ENCODE measurements at regions of chr17 and their contacts with region 1.

Region 1: GRCh38 chr17:78865682-78866390 is 25.2 kb upstream of the USP36 start:
- DNase-seq: peak; percentile 76
- ATAC-seq: peak; percentile 74
- H3K4me3 Mint-ChIP-seq: no peak overlapping the region
- H3K27ac Mint-ChIP-seq: no peak overlapping the region
- H3K4me1 Mint-ChIP-seq: no peaks in the 10 kb centered on the region
- H3K27me3 Mint-ChIP-seq: no peaks in the 10 kb centered on the region

Region 2: DNA sequence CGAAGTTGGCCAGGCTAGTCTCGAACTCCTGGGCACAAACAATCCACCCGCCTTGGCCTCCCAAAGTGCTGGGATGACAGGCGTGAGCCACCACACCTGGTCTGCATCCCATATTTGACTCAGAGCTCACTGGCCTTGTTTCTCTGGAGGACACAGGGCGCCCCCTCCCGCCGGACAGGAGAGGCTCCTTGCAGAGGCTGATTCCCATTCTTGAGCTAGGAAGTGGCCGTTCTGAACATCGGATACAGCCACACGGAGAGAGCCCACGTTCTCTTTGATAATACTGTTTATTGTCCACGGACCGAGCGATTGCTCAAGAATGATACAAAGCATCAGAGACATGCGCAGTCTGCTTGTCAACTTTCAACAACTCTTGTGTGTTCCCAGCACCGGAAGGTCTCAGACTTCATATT is 13.1 kb before region 1 on chr17:
- CTCF ChIA-PET with region 1: interaction called, 33 read pairs
- POLR2A ChIA-PET with region 1: no interaction called
- DNase-seq: no peak
- ATAC-seq: no peak
- H3K4me3 Mint-ChIP-seq: no peak overlapping the region
- H3K27ac Mint-ChIP-seq: no peak overlapping the region
- H3K4me1 Mint-ChIP-seq: no peaks in the 10 kb centered on the region
- H3K27me3 Mint-ChIP-seq: no peaks in the 10 kb centered on the region

Region 3: GRCh38 chr17:78890498-78890897 is 24.7 kb after region 1 on chr17:
- CTCF ChIA-PET with region 1: interaction called, 13 read pairs
- POLR2A ChIA-PET with region 1: no interaction called
- DNase-seq: peak; percentile 73
- ATAC-seq: peak; percentile 75
- H3K4me3 Mint-ChIP-seq: no peak overlapping the region
- H3K27ac Mint-ChIP-seq: peak overlapping the region; percentile 89
- H3K4me1 Mint-ChIP-seq: peaks cover 37% of the 10 kb centered on the region
- H3K27me3 Mint-ChIP-seq: no peaks in the 10 kb centered on the region

Region 4: DNA sequence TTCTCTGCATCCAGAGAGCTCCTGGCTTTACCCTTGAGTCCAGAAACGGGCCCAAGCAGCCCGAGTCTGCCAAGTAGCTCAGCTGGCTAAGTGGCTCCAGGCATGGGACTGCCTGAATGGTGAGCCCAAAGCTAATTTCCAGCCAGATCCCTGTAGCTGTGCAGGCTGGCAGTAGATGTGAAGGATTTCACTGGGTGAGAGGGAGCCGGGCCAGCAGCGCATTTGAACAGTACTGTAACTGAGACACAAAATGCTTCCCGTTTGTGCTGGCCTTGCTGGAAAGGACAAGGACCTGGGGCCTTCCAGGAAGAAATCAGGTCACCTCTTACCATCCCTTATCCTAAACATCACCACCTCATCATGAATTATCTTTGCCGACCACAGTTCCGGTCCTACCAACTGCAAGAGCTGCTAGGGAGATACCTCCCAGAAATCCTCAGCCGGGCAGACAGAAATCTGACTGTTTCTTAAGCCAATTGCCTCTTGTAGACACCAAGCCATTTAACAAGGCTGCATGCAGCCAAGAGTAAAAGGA is 55.7 kb after region 1 on chr17:
- CTCF ChIA-PET with region 1: interaction called, 10 read pairs
- POLR2A ChIA-PET with region 1: no interaction called
- DNase-seq: no peak
- ATAC-seq: no peak
- H3K4me3 Mint-ChIP-seq: no peak overlapping the region
- H3K27ac Mint-ChIP-seq: no peak overlapping the region
- H3K4me1 Mint-ChIP-seq: peaks cover 19% of the 10 kb centered on the region
- H3K27me3 Mint-ChIP-seq: peaks cover 7% of the 10 kb centered on the region

Region 5: GRCh38 chr17:78970834-78971773 is 105.3 kb after region 1 on chr17:
- CTCF ChIA-PET with region 1: interaction called, 56 read pairs
- POLR2A ChIA-PET with region 1: no interaction called
- DNase-seq: peak; percentile 87
- ATAC-seq: peak; percentile 67
- H3K4me3 Mint-ChIP-seq: no peak overlapping the region
- H3K27ac Mint-ChIP-seq: no peak overlapping the region
- H3K4me1 Mint-ChIP-seq: peaks cover 17% of the 10 kb centered on the region
- H3K27me3 Mint-ChIP-seq: no peaks in the 10 kb centered on the region

Region 6: GRCh38 chr17:79027925-79028813 is 162.3 kb after region 1 on chr17:
- CTCF ChIA-PET with region 1: no interaction called
- POLR2A ChIA-PET with region 1: no interaction called
- DNase-seq: no peak
- ATAC-seq: no peak
- H3K4me3 Mint-ChIP-seq: no peak overlapping the region
- H3K27ac Mint-ChIP-seq: no peak overlapping the region
- H3K4me1 Mint-ChIP-seq: peaks cover 12% of the 10 kb centered on the region
- H3K27me3 Mint-ChIP-seq: peaks cover 24% of the 10 kb centered on the region